ENCODE measurements at regions of chr3 and their contacts with region 1.

Region 1: DNA sequence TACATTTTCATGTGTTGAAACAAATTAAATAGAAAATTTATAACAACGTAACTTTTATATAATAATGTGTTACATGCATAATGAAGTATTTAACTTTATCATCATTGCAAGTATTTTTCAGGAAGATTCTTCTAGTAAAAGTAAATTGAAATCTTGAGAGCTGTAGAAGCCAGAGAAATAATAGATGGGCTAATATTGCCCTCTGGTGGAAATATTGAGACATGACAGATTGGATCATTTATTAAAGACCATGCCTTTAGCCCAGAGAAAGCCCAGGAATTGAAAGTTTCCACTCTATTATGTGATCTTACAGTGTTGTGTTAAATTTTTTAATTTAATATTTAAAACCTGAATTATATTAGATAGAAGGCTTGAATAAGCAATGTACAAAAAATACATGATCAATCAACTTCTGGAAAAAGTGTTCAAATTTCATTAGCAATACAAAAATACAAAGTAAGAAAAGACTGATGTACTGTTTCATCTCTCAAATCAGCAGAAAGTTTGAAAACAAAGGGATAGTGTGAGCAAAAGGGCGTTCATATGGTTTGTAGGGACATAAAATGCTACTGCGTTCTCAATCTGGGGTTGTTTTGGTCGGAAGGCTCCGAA is 52.7 kb upstream of the SPTSSB start:
- DNase-seq: no peak
- ATAC-seq: peak in 1 of 2 donors; percentile 45
- H3K4me3 ChIP-seq: no peak overlapping the region
- H3K27ac ChIP-seq: no peak overlapping the region
- H3K4me1 ChIP-seq: no peaks in the 10 kb centered on the region
- H3K27me3 ChIP-seq: no peaks in the 10 kb centered on the region

Region 2: GRCh38 chr3:160686955-160687535 is 737.0 kb before region 1 on chr3:
- intact Hi-C with region 1: loop called in 1 of 4 experiments (anchors 10 kb)
- DNase-seq: no peak
- ATAC-seq: no peak
- H3K4me3 ChIP-seq: no peak overlapping the region
- H3K27ac ChIP-seq: no peak overlapping the region
- H3K4me1 ChIP-seq: no peaks in the 10 kb centered on the region
- H3K27me3 ChIP-seq: no peaks in the 10 kb centered on the region

Region 3: DNA sequence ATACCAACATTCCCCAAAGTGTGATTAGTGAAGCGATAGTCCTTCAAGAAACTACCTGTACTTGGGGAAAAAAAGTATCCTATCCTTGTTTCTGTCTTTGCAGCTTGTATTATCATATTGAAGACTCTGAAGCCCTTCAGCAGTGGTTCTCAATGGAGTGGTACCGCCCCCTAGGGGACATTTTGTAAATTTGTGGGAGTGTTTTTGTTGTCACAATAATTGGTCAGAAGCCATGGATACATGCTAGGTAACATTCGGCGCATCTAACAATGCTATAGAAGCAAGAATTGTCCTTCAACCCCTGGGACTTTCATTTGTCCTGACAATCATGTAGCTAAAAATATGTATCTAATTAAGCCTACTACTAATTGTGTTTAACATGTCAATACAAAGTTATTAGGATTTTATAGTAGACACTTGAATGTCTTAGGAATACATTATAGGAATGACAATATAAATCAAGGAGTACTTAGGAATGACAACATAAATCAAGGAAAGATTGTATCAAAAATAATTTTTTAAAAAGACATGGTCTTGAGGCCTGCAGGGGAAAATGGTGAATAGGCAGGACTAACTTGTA is 149.2 kb before region 1 on chr3:
- intact Hi-C with region 1: loop called (anchors 5 to 10 kb)
- DNase-seq: no peak
- ATAC-seq: peak in 1 of 2 donors; percentile 20
- H3K4me3 ChIP-seq: no peak overlapping the region
- H3K27ac ChIP-seq: no peak overlapping the region
- H3K4me1 ChIP-seq: no peaks in the 10 kb centered on the region
- H3K27me3 ChIP-seq: no peaks in the 10 kb centered on the region

Region 4: GRCh38 chr3:161489395-161489794 is 65.4 kb after region 1 on chr3:
- intact Hi-C with region 1: no loop called
- DNase-seq: no peak
- ATAC-seq: no peak
- H3K4me3 ChIP-seq: no peak overlapping the region
- H3K27ac ChIP-seq: no peak overlapping the region
- H3K4me1 ChIP-seq: no peaks in the 10 kb centered on the region
- H3K27me3 ChIP-seq: no peaks in the 10 kb centered on the region

Region 5: DNA sequence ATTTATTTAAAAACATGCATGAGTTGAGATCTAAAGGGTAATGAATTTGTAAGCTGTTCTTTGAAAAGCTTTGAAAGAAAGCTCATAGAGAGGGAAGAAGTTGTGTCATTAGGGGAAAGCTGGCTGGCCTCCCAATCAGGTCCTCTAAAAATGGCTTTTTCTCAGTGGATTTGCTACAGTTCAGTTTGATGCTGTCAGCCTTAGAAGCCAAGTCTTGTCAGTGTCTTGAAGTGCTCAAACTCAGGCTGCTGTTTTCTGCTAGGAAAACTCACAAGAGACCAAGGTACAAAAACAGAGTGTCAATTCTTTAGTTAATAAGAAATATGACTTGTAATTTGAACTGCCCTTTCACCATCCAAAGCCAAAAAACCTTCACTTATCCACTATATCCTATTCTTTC is 316.4 kb after region 1 on chr3:
- intact Hi-C with region 1: no loop called
- DNase-seq: no peak
- ATAC-seq: no peak
- H3K4me3 ChIP-seq: no peak overlapping the region
- H3K27ac ChIP-seq: no peak overlapping the region
- H3K4me1 ChIP-seq: peaks cover 3% of the 10 kb centered on the region
- H3K27me3 ChIP-seq: no peaks in the 10 kb centered on the region

Measured in right cardiac atrium (tissue), 5 donors.